Stomach (tissue), 19 donors: ENCODE measurements at regions of chr2 and their contacts with region 1.

Region 1: GRCh38 chr2:70094978-70095719 is 7.9 kb downstream of the PCBP1 start:
- DNase-seq: peak; percentile 81 to 91
- H3K4me3 ChIP-seq: no peak overlapping the region
- H3K27ac ChIP-seq: peak overlapping the region; percentile 77 to 96 (median 88)
- H3K4me1 ChIP-seq: peaks cover 12 to 45% (median 31%) of the 10 kb centered on the region in 4 donors
- H3K27me3 ChIP-seq: no peaks in the 10 kb centered on the region
- CTCF ChIP-seq: no peak
- EP300 ChIP-seq: no peak
- POLR2A ChIP-seq: no peak

Region 2: DNA sequence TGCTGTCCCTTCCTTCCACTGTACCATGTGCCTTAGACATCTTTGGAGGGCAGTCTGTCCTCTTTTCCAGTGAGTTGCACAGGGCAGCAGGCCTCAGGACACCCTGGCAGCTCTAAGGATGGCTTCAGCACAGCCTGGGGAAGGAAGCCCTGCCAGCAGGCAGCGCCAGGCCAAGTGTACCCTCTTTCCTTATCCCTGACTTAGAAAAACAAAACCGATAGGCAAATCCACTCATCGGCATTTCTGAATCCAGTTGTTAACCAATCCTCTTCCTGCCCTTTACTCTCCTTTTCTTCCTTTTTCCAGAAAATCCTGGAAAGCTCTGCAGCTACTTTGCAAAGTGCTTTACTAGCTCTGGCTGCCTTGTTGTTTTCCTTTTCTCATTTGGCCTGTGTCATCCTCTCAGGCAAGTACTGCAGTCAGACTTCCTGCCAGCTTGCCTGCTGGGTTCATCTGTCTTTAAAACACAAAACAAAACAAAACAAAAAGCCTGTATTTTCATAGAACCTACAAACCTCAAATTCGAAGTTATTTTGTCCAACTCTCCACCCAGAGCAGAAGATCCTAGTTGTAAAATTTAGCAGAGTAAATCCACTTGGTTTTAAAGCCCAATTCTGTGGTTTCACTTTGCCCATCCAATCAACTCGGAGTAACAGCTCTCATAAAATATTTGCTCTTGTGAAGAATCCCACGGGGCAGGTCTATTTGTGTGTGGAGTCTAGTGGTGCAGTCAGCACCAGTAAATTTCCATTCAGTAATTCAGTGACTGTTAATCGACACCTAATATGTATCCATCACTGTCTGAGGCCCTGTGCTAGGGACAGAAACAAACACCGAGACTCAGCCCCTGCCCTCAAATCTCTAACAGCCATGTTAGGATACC is 37.3 kb after region 1 on chr2:
- intact Hi-C with region 1: loop called (anchors 5 kb)
- DNase-seq: peak; percentile 55 to 79
- H3K4me3 ChIP-seq: peak overlapping the region; percentile 27 to 34 (median 31)
- H3K27ac ChIP-seq: peak overlapping the region; percentile 84 to 94 (median 90)
- H3K4me1 ChIP-seq: peaks cover 31 to 65% (median 49%) of the 10 kb centered on the region in 4 donors
- H3K27me3 ChIP-seq: no peaks in the 10 kb centered on the region
- CTCF ChIP-seq: no peak
- EP300 ChIP-seq: no peak
- POLR2A ChIP-seq: no peak